Naive thymus-derived CD4-positive, alpha-beta T cell (primary cell): ENCODE measurements at regions of chr9 and their contacts with region 1.

Region 1: DNA sequence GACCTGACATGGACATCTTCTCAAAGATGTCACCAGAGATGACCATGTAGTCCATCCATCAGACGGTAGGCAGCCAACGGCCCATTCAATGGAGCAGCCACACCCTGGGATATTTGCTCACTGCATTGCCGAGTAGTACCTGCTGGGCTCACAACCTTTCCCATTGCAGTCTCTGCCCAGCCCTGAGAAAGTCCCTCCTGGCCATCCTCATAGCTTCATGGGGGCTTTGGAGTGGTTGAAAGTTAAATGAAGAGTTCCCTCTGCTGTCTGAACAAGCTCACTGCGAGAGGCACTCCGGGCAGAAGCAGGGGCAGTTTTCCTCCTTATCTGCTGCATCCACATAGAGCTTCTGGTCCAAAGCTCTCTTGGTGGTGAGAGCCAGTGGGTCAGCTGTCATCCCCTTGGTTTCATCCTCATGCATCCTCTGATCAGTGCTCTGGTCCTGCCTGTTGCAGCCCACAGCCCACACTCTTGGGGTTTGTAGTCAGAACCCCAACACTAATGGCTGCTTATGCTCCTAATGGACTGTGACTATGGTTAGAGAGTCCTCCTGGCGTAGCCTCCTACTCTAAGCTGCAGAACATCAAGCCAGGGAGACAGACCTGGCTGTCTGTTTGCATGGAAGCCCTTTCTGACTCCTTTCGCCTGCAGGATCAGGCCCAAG is 23.4 kb downstream of the TNFSF8 start:
- DNase-seq: peak in 2 of 9 donors; percentile 31 to 41
- ATAC-seq: peak; percentile 39
- H3K4me3 ChIP-seq: no peak overlapping the region
- H3K4me3 Mint-ChIP-seq: peak overlapping the region in 5 of 10 donors; percentile 6 to 79 (median 74)
- H3K27ac ChIP-seq: no peak overlapping the region
- H3K27ac Mint-ChIP-seq: peak overlapping the region in 8 of 9 donors; percentile 20 to 96 (median 53)
- H3K4me1 ChIP-seq: peaks cover 60 to 78% of the 10 kb centered on the region in 2 donors
- H3K4me1 Mint-ChIP-seq: peaks cover 50 to 79% (median 58%) of the 10 kb centered on the region in 7 donors
- H3K27me3 ChIP-seq: no peaks in the 10 kb centered on the region
- H3K27me3 Mint-ChIP-seq: no peaks in the 10 kb centered on the region

Region 2: DNA sequence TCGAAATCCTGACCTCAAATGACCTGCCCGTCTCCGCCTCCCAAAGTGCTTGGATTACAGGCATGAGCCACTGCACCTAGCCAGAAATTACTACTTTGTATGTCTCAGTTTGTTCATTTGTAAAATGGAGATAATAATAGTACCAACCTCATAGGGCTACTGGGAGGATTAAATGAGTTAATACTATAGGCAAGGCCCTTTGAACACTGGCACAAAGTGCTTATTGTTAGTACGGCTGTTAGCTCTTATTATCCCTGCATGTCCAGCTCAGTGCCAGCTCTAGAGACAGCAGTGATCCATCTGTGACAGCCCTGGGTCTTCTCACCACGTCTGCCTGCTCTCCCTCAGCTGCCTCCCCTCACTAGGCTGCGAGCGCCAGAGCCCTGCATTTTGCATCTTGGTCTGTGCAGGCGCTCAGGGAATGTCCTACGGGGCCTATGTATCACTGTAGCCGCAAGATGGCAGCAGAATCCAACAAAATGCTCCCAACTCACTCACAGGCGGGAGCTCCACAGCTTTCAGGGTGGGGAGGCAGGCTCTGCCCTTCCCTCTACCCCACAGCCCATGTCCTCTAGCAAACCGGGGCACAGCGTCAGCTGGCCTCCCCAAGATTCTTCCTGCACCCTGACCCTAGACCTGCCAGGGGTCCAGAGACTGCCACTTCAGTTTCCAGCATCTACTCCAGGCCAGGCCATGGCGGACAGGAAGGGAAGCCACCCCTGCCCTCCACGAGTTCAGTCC is 501.6 kb before region 1 on chr9:
- CTCF ChIA-PET with region 1: interaction called, 6 read pairs
- POLR2A ChIA-PET with region 1: no interaction called
- intact Hi-C with region 1: loop called in 1 of 2 experiments (anchors 5 kb)
- DNase-seq: peak; percentile 56 to 84 (median 80)
- ATAC-seq: peak; percentile 97
- H3K4me3 ChIP-seq: no peak overlapping the region
- H3K4me3 Mint-ChIP-seq: no peak overlapping the region
- H3K27ac ChIP-seq: no peak overlapping the region
- H3K27ac Mint-ChIP-seq: peak overlapping the region in 6 of 9 donors; percentile 16 to 91 (median 60)
- H3K4me1 ChIP-seq: peaks cover 4 to 11% of the 10 kb centered on the region in 2 donors
- H3K4me1 Mint-ChIP-seq: peaks cover 6 to 10% (median 6%) of the 10 kb centered on the region in 7 donors
- H3K27me3 ChIP-seq: no peaks in the 10 kb centered on the region
- H3K27me3 Mint-ChIP-seq: no peaks in the 10 kb centered on the region

Region 3: GRCh38 chr9:114434878-114435311 is 472.1 kb before region 1 on chr9:
- CTCF ChIA-PET with region 1: no interaction called
- POLR2A ChIA-PET with region 1: no interaction called
- intact Hi-C with region 1: no loop called
- DNase-seq: peak in 4 of 9 donors; percentile 9 to 20 (median 15)
- ATAC-seq: no peak
- H3K4me3 ChIP-seq: no peak overlapping the region
- H3K4me3 Mint-ChIP-seq: no peak overlapping the region
- H3K27ac ChIP-seq: no peak overlapping the region
- H3K27ac Mint-ChIP-seq: no peak overlapping the region
- H3K4me1 ChIP-seq: no peaks in the 10 kb centered on the region
- H3K4me1 Mint-ChIP-seq: peaks cover 0 to 5% (median 4%) of the 10 kb centered on the region in 7 donors
- H3K27me3 ChIP-seq: no peaks in the 10 kb centered on the region
- H3K27me3 Mint-ChIP-seq: peaks cover 0 to 16% (median 0%) of the 10 kb centered on the region in 5 donors

Region 4: DNA sequence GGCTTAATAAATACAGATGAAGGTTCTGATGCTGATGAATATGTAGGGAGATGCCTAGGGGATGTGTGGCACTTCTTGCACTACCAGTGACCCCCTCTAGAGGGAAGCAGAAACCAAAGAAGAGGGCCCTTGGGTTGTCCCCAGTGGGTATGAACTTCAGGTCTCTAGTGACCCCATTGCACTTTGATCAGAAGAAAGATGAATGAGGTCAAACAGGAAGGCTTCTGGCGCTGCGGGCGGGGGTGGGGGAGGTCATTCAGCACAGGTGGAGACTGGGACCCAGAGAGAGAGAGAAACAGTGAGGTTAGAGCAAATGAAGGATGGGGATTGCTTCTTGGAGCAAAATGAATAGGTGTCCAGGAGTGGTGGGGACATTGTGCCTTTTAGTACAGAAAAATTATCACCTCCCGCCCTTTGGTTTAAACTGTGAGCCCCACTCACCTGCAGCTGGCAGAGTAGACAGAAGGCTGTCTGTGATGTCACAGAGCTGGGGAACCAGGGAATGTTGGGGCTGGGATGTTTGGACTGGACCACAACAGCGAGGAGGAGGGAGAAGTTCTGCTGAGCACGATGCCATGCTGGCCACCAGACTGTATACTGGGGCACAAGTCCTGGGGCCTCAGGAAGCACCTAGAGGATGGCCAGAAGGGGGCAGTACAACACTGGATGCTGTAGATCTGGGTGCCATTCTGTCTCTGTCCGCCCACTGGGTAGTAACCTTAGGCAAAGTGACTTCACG is 225.3 kb before region 1 on chr9 and contains the start of gene TEX48:
- CTCF ChIA-PET with region 1: interaction called, 18 read pairs
- POLR2A ChIA-PET with region 1: interaction called, 3 read pairs
- intact Hi-C with region 1: loop called (anchors 1 kb)
- DNase-seq: peak; percentile 29 to 74 (median 62)
- ATAC-seq: peak; percentile 95
- H3K4me3 ChIP-seq: no peak within 1 kb of the TSS
- H3K4me3 Mint-ChIP-seq: peak within 1 kb of the TSS in 1 of 10 donors; percentile 56
- H3K27ac ChIP-seq: no peak within 1 kb of the TSS
- H3K27ac Mint-ChIP-seq: peak within 1 kb of the TSS in 1 of 9 donors; percentile 95
- H3K4me1 ChIP-seq: peaks cover 5 to 11% of the 10 kb centered on the region in 2 donors
- H3K4me1 Mint-ChIP-seq: peaks cover 0 to 58% (median 7%) of the 10 kb centered on the region in 7 donors
- H3K27me3 ChIP-seq: peaks cover 0 to 4% of the 10 kb centered on the region in 2 donors
- H3K27me3 Mint-ChIP-seq: peaks cover 0 to 20% (median 14%) of the 10 kb centered on the region in 5 donors
- total RNA-seq, gene TEX48: 0.85 TPM in 1 of 5 experiments, not detected in the others

Region 5: GRCh38 chr9:114696814-114697544 is 210.1 kb before region 1 on chr9:
- CTCF ChIA-PET with region 1: no interaction called
- POLR2A ChIA-PET with region 1: no interaction called
- intact Hi-C with region 1: loop called in 1 of 2 experiments (anchors 1 kb)
- DNase-seq: peak in 1 of 9 donors; percentile 67
- ATAC-seq: peak; percentile 37
- H3K4me3 ChIP-seq: no peak overlapping the region
- H3K4me3 Mint-ChIP-seq: peak overlapping the region in 1 of 10 donors; percentile 80
- H3K27ac ChIP-seq: no peak overlapping the region
- H3K27ac Mint-ChIP-seq: peak overlapping the region in 3 of 9 donors; percentile 27 to 99 (median 66)
- H3K4me1 ChIP-seq: peaks cover 0 to 17% of the 10 kb centered on the region in 2 donors
- H3K4me1 Mint-ChIP-seq: peaks cover 5 to 79% (median 9%) of the 10 kb centered on the region in 7 donors
- H3K27me3 ChIP-seq: no peaks in the 10 kb centered on the region
- H3K27me3 Mint-ChIP-seq: no peaks in the 10 kb centered on the region

Region 6: DNA sequence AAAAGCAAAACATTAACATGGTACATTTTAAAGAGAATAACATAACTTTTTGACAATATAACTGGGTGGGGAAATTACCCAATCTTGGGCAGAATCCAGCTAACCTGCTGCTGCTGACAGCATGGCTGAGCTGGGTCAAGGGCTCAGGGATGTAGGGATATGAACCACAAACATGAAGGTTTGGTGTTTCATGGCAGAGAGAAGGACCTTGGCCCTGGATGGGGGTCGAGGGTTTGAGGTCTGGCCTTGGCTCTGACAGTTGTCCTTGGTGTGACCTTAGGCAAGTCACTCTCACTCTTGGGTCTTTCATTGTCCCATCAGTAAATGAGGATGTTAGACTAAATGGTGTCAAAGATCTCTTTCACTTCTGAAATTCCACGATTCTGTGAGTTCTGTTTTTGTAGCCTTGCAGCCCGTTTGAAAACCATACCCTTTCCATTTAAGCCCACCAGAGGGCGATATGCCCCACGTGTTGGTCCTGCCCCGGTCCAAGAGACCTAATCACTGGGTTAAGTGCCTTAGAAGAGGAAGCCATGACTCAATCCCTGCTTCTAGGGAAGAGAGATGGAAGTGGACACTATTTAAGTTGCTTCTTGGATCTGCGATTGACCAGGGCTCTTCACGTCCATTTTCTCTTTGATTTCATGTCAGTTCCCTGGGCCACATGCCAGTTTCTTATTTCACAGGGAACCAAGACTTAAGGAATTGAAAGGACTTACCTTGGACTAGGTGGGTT is 168.3 kb before region 1 on chr9:
- CTCF ChIA-PET with region 1: interaction called, 151 read pairs
- POLR2A ChIA-PET with region 1: interaction called, 3 read pairs
- intact Hi-C with region 1: loop called (anchors 1 kb)
- DNase-seq: peak; percentile 41 to 81 (median 70)
- ATAC-seq: peak; percentile 97
- H3K4me3 ChIP-seq: no peak overlapping the region
- H3K4me3 Mint-ChIP-seq: peak overlapping the region in 4 of 10 donors; percentile 39 to 77 (median 52)
- H3K27ac ChIP-seq: no peak overlapping the region
- H3K27ac Mint-ChIP-seq: peak overlapping the region in 8 of 9 donors; percentile 26 to 88 (median 74)
- H3K4me1 ChIP-seq: peaks cover 30 to 34% of the 10 kb centered on the region in 2 donors
- H3K4me1 Mint-ChIP-seq: peaks cover 14 to 70% (median 33%) of the 10 kb centered on the region in 7 donors
- H3K27me3 ChIP-seq: no peaks in the 10 kb centered on the region
- H3K27me3 Mint-ChIP-seq: peaks cover 0 to 2% (median 0%) of the 10 kb centered on the region in 5 donors

Region 7: GRCh38 chr9:114919611-114920010 is 12.6 kb after region 1 on chr9:
- CTCF ChIA-PET with region 1: interaction called, 20 read pairs
- POLR2A ChIA-PET with region 1: interaction called, 11 read pairs
- intact Hi-C with region 1: loop called in 1 of 2 experiments (anchors 1 kb)
- DNase-seq: no peak
- ATAC-seq: no peak
- H3K4me3 ChIP-seq: no peak overlapping the region
- H3K4me3 Mint-ChIP-seq: peak overlapping the region in 5 of 10 donors; percentile 23 to 97 (median 41)
- H3K27ac ChIP-seq: no peak overlapping the region
- H3K27ac Mint-ChIP-seq: peak overlapping the region in 8 of 9 donors; percentile 24 to 83 (median 40)
- H3K4me1 ChIP-seq: peaks cover 40 to 49% of the 10 kb centered on the region in 2 donors
- H3K4me1 Mint-ChIP-seq: peaks cover 41 to 100% (median 94%) of the 10 kb centered on the region in 7 donors
- H3K27me3 ChIP-seq: no peaks in the 10 kb centered on the region
- H3K27me3 Mint-ChIP-seq: no peaks in the 10 kb centered on the region

Region 8: DNA sequence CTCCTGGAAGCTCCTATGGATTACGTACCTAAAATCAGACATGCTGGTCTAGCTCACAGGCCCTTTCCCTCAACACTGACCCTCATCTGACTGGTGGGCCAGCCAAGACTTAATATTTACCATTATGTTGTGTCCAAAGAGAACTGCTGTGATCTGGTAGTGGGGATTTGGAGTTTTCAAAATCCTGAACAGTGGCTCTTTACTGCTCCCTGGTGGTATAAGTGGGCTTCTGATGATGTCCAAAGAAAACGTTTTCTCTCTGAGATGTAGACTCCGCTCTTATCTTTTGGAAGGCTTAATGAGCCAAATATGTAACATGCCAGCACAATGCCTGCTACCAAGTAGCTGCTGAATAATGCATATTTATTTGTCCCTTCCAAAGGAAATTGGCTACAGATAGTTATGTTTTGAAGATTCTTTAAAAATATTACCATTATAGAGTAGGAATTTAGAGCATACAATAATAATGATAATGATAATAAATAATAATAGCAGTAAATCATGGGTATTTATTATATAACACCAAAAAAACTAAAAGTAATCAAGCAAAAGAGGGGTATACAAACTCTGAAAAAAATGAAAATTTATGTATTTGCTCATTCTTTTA is 617.5 kb after region 1 on chr9:
- CTCF ChIA-PET with region 1: no interaction called
- POLR2A ChIA-PET with region 1: no interaction called
- intact Hi-C with region 1: loop called in 1 of 2 experiments (anchors 5 kb)
- DNase-seq: peak in 4 of 9 donors; percentile 4 to 16 (median 8)
- ATAC-seq: no peak
- H3K4me3 ChIP-seq: no peak overlapping the region
- H3K4me3 Mint-ChIP-seq: no peak overlapping the region
- H3K27ac ChIP-seq: no peak overlapping the region
- H3K27ac Mint-ChIP-seq: no peak overlapping the region
- H3K4me1 ChIP-seq: no peaks in the 10 kb centered on the region
- H3K4me1 Mint-ChIP-seq: no peaks in the 10 kb centered on the region
- H3K27me3 ChIP-seq: no peaks in the 10 kb centered on the region
- H3K27me3 Mint-ChIP-seq: peaks cover 12 to 35% (median 18%) of the 10 kb centered on the region in 5 donors